ENCODE measurements at regions of chr12 and their contacts with region 1.

Region 1: DNA sequence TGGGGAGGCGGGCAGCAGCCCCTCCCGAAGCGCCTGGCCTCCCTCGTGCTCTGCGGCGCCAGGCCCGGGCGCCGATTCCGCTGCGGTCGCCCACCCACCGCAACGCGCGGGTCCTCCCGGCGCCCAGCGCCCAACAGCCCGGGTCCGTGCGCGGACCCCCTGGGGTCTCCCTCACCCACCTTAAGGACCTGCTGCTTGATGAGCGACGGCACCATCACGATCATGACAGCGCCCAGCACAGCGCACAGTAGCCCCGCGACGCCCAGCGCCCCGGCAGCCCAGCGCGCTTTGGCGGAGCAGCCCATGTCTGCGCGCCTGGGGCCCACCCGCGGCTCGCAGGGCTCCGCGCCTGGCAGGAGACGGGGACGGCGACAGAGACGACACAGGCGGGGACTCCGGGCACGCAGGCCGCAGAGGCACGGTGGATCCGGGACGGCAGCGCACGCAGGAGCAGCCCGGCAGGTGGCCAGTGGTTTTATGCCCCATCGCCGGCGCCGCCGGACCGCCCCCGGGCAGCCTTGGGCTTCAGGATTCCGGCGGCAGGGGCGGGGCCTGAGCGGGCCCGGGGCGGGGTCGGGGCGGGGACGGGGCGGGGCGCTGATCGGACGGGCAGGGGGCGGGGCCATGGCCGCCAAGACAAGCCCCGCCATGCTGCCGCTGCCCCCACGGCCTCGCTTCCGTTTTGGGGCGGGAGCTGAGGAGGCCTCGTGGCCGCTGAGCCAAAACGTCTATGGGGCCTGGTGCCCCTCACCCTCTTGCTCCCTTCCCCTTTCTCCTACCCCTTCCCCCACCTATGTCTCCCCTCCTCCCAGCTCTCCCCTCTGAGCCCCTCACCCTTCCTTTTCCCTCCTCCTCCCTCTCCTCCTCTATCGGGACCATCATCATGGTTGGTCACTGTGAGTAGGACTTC is at the start of gene SCARB1:
- DNase-seq: peak; percentile 90
- H3K4me3 ChIP-seq: peak within 1 kb of the TSS; percentile 90
- H3K27ac ChIP-seq: peak within 1 kb of the TSS; percentile 58
- H3K4me1 ChIP-seq: peaks cover 41% of the 10 kb centered on the region
- CTCF ChIP-seq: no peak
- total RNA-seq, gene SCARB1: 24.4 and 42.9 TPM in 2 replicates

Region 2: GRCh38 chr12:124609041-124609995 is 254.4 kb before region 1 on chr12:
- CTCF ChIA-PET with region 1: no interaction called
- POLR2A ChIA-PET with region 1: no interaction called
- intact Hi-C with region 1: no loop called
- DNase-seq: peak; percentile 96
- H3K4me3 ChIP-seq: peak overlapping the region; percentile 48
- H3K27ac ChIP-seq: peak overlapping the region; percentile 89
- H3K4me1 ChIP-seq: peaks cover 39% of the 10 kb centered on the region
- CTCF ChIP-seq: peak; percentile 24; the same call in 1 of the 2 replicates

Region 3: DNA sequence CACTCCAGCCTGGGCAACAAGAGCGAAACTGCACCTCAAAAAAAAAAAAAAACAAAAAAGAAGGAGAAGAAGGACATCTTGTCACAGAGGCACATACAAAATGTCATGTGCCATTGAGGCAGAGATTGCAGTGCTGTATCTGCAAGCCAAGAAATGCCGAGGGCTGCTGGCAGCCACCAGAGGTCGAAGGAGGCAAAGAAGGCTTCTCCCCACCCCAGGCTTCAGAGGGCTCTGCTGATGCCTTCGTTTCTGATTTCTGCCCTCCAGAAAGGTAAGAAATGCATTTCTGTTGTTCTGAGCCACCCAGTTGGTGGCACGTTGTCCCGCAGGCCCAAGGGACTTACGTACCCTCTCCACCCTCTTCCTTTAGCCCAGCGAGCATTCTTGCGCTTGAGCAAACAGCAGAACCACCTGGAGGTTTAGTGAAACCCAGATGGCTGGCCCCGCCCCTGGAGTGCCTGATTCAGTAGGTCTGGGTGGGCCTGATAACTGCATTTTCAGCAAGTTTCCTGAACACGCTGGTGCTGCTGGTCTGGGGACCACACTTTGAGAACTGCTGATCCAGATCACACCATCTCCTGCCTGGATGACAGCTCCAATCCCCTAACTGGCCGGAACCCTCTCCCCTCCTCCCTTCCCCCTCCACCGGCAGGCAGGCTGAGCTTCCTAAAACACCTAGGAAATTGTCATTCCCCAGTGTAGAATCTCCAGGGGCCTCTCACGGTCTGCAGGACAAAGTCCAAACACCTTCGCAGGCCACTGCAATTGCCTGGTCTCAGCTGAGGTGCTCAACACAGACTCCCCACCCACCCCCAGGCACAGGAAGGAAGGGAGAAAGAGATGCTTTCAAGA is 21.1 kb after region 1 on chr12:
- CTCF ChIA-PET with region 1: interaction called, 3 read pairs
- POLR2A ChIA-PET with region 1: interaction called, 6 read pairs
- intact Hi-C with region 1: loop called (anchors 1 kb)
- DNase-seq: peak; percentile 99
- H3K4me3 ChIP-seq: peak overlapping the region; percentile 50
- H3K27ac ChIP-seq: peak overlapping the region; percentile 95
- H3K4me1 ChIP-seq: peaks cover 75% of the 10 kb centered on the region
- CTCF ChIP-seq: peak; percentile 43

Region 4: GRCh38 chr12:124898200-124898922 is 34.7 kb after region 1 on chr12:
- CTCF ChIA-PET with region 1: interaction called, 4 read pairs
- POLR2A ChIA-PET with region 1: interaction called, 5 read pairs
- intact Hi-C with region 1: loop called (anchors 1 kb)
- DNase-seq: peak; percentile 86
- H3K4me3 ChIP-seq: peak overlapping the region; percentile 40
- H3K27ac ChIP-seq: peak overlapping the region; percentile 32
- H3K4me1 ChIP-seq: peaks cover 65% of the 10 kb centered on the region
- CTCF ChIP-seq: peak; percentile 93

Region 5: DNA sequence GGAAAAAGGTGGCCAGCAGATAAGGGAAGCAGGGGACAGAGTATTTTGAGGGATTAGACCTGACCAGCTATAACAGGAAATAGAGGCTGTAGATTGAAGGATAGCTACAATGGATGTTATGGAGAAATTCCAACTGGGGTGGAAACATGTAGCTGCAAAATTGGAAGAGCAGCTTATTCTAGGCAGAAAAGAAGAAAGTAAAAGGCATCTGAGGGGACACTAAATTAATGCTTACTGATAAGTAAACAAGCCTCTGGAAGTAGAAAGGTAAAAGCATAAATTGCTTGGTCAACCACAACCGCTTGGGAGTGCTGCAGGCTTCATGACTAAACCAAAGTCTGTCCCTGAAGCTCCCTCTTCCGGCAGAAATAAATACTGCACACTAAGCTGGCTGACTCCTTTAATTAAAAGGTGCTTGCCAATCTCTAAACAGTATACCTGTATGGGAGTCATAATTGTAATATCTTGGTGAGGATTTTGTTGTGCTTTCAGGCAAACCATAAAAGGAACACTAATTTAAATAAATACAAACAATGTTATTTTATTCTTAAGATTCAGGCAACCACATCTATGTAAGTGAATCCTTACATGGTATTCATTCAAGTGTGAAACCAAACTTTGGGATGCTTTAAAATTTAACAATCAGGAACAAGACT is 43.1 kb after region 1 on chr12:
- CTCF ChIA-PET with region 1: no interaction called
- POLR2A ChIA-PET with region 1: interaction called, 5 read pairs
- intact Hi-C with region 1: loop called (anchors 2 kb)
- DNase-seq: peak; percentile 96
- H3K4me3 ChIP-seq: peak overlapping the region; percentile 6
- H3K27ac ChIP-seq: peak overlapping the region; percentile 23
- H3K4me1 ChIP-seq: peaks cover 65% of the 10 kb centered on the region
- CTCF ChIP-seq: peak; percentile 100

Region 6: DNA sequence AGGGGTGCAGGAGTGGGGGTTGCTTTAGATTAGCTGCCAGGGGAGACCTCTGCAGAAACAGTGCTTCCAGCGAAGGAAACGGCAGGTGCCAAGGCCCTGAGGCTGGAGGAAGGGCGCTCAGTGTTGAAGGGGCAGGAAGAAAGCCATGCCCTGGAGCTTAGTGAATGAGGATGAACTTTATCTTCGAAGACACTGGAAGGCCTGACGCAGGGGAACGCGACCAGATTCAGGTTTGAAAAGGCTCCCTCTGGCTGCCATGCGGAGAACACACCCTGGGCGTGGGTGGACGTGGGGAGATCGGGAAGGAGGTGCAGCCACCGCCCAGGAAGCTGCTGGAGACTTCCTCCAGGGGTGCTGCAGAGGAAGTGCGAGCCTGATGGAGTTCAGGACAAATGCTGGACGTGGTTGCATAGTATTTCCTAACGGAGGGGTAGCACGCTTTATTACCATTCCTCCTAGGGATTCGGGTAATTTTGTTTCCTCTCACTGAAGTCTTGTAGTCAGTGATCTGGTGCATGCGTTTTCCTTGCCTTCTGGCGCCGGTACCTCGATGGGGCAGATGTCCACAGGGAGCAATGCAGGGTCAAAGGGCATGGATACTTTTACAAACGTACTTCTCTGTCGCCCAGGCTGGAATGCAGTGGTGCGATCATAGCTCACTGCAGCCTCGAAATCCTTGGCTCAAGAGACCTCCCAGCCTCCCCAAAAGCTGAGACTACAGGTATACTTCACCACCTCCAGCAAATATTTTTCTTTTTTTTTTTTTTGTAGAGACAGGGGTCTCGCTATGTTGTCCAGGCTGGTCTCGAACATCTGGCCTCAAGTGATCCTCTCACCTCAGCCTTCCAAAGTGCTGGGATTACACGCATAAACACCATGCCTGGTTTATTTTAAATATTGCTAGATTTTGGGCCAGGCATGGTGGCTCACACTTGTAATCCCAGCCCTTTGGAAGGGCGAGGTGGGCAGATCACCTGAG is 77.2 kb after region 1 on chr12:
- CTCF ChIA-PET with region 1: no interaction called
- POLR2A ChIA-PET with region 1: interaction called, 3 read pairs
- intact Hi-C with region 1: loop called (anchors 1 kb)
- DNase-seq: peak; percentile 90
- H3K4me3 ChIP-seq: peak overlapping the region; percentile 72
- H3K27ac ChIP-seq: peak overlapping the region; percentile 88
- H3K4me1 ChIP-seq: peaks cover 29% of the 10 kb centered on the region
- CTCF ChIP-seq: peak; percentile 92

Region 7: DNA sequence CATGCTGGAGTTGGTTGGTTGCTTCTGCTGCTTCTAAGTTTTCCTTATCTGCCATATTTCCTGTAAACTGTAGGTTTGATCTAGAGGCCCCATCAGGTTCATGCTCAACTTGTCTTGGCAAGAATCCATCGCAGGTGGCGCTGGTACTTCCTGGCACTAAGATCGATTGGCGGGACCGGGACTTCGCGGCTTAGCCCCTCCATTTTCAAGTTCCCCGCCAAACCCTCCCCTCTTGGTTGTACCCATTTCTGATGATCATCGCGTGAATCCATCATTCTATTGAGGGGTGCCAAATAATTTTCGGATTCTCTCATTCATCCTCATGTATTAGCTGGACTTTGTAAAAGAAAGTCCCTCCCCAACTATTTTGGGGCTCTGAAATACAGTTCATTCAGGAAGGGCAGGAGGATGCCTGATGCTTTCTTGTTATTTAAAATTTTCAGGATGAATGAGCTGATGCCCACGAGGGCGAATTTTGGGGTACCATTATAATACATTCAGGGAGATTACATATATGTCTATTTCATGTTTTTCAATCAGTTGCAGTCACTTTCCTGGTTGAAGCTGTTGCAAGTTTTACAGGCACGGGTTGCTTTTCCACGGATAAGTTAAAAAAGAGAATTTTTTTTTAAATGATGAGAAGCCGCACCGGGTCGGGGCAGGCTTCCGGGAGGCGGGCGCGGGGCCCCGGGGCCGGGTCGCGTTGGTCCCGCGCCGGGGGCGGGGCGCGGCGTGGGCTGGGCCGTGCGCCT is 129.4 kb after region 1 on chr12:
- CTCF ChIA-PET with region 1: interaction called, 10 read pairs
- POLR2A ChIA-PET with region 1: no interaction called
- intact Hi-C with region 1: no loop called
- DNase-seq: peak; percentile 95
- H3K4me3 ChIP-seq: peak overlapping the region; percentile 87
- H3K27ac ChIP-seq: peak overlapping the region; percentile 96
- H3K4me1 ChIP-seq: peaks cover 41% of the 10 kb centered on the region
- CTCF ChIP-seq: peak; percentile 91